ENCODE measurements at regions of chr9 and their contacts with region 1.

Region 1: GRCh38 chr9:80449513-80449912 is 877.7 kb downstream of the TLE4 start:
- DNase-seq: no peak
- H3K4me3 ChIP-seq: no peak overlapping the region
- H3K27ac ChIP-seq: peak overlapping the region; percentile 82
- H3K4me1 ChIP-seq: peaks cover 16% of the 10 kb centered on the region
- H3K27me3 ChIP-seq: no peaks in the 10 kb centered on the region
- CTCF ChIP-seq: no peak

Region 2: DNA sequence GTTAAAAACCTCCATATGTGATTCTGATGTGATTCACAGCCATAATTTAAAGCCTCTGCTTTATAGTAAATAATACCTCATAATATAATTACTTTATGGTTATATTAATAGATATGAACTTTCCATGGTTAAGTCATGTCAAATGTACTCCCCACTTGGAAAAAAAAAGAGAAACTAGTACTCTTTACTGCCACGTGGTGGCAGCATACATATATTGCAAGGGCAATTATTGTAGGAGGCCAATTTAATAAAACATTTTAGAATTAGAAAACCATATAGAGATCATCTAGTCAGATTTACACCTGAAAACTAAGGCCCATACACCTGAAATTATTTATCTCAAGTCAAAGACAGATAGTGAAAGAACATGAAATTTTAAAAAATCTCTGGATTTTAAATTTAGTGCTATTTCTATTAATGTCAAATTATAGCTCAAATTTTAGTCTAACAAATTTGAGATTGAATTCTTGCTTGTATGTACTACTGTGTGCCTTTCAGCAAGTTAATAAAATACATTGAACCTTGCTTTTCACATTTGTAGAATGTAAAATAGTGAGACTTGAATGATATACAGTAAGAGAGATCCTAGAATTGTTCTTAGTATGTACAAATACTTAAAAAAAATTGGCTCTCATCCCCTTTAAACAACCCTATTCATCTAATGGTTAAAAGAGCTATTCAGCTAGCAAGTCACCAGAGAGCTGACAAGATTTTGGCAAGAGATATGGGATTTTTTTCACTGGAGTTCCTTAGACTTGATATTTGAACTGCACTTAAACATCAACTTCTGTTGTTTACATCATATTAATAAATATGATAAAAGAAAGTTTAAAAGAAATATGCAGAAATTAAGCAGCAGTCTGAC is 274.0 kb before region 1 on chr9:
- CTCF ChIA-PET with region 1: no interaction called
- POLR2A ChIA-PET with region 1: no interaction called
- intact Hi-C with region 1: loop called (anchors 1 kb)
- DNase-seq: peak; percentile 56
- H3K4me3 ChIP-seq: no peak overlapping the region
- H3K27ac ChIP-seq: no peak overlapping the region
- H3K4me1 ChIP-seq: peaks cover 3% of the 10 kb centered on the region
- H3K27me3 ChIP-seq: no peaks in the 10 kb centered on the region
- CTCF ChIP-seq: peak; percentile 78

Region 3: GRCh38 chr9:80520231-80520630 is 70.7 kb after region 1 on chr9:
- CTCF ChIA-PET with region 1: no interaction called
- POLR2A ChIA-PET with region 1: no interaction called
- intact Hi-C with region 1: loop called (anchors 2 kb)
- DNase-seq: no peak
- H3K4me3 ChIP-seq: no peak overlapping the region
- H3K27ac ChIP-seq: no peak overlapping the region
- H3K4me1 ChIP-seq: no peaks in the 10 kb centered on the region
- H3K27me3 ChIP-seq: no peaks in the 10 kb centered on the region
- CTCF ChIP-seq: no peak

Region 4: GRCh38 chr9:80605129-80605528 is 155.6 kb after region 1 on chr9:
- CTCF ChIA-PET with region 1: no interaction called
- POLR2A ChIA-PET with region 1: no interaction called
- intact Hi-C with region 1: no loop called
- DNase-seq: peak; percentile 44
- H3K4me3 ChIP-seq: no peak overlapping the region
- H3K27ac ChIP-seq: no peak overlapping the region
- H3K4me1 ChIP-seq: no peaks in the 10 kb centered on the region
- H3K27me3 ChIP-seq: no peaks in the 10 kb centered on the region
- CTCF ChIP-seq: peak; percentile 50; the same call in 1 of the 2 replicates

Region 5: GRCh38 chr9:80699511-80699998 is 250.0 kb after region 1 on chr9:
- CTCF ChIA-PET with region 1: no interaction called
- POLR2A ChIA-PET with region 1: no interaction called
- intact Hi-C with region 1: loop called (anchors 2 kb)
- DNase-seq: peak; percentile 94
- H3K4me3 ChIP-seq: no peak overlapping the region
- H3K27ac ChIP-seq: no peak overlapping the region
- H3K4me1 ChIP-seq: peaks cover 19% of the 10 kb centered on the region
- H3K27me3 ChIP-seq: no peaks in the 10 kb centered on the region
- CTCF ChIP-seq: no peak

Region 6: DNA sequence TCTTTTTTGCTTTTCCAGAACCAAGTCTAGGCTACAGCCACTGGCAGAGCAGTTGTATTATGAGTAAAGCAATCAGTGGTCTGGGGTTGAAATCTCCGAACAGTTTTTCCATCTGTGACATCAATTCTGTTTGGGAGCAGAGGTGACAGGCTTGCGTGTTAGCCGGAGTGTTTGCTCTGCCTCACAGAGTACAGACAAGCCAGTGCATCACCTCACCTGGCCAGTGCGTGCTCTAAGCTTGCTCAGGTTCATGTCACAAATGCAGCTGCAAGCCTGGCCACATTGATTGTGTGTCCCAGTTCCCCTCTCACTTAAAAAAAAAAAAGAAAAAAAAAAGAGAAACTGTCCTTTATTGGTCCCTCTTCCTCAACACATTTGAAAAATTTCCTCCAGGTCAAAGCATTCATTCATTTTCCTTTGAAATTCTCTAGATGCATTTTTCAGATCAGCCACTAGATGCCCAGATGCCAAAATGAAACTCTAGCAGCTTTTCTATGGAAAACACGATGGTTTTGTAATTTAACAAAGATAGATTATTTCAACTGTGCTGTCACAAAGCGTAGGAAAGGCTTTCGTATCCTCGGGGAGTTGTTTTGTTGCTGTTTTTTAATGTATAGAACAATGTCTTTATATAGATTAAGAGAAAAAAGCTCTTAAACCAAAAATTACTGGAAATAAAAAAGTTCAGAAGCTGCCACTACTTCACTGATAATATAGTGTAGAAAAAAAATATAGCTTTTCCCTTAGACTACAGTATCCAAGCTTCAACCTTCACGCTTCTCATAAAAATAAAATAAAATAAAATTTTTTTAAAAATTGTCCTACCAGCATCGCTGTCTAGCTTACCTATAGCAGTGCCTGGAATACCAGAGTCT is 654.3 kb after region 1 on chr9:
- CTCF ChIA-PET with region 1: no interaction called
- POLR2A ChIA-PET with region 1: no interaction called
- intact Hi-C with region 1: no loop called
- DNase-seq: no peak
- H3K4me3 ChIP-seq: no peak overlapping the region
- H3K27ac ChIP-seq: no peak overlapping the region
- H3K4me1 ChIP-seq: no peaks in the 10 kb centered on the region
- H3K27me3 ChIP-seq: no peaks in the 10 kb centered on the region
- CTCF ChIP-seq: no peak; the same call in 1 of the 2 replicates

Measured in A673 (cell line).